ENCODE measurements at regions of chr5 and their contacts with region 1.

Region 1: GRCh38 chr5:141734501-141735230 is 52.6 kb upstream of the ARAP3 start:
- DNase-seq: peak; percentile 66
- H3K4me3 ChIP-seq: no peak overlapping the region
- H3K27ac ChIP-seq: no peak overlapping the region
- H3K4me1 ChIP-seq: no peaks in the 10 kb centered on the region
- H3K27me3 ChIP-seq: no peaks in the 10 kb centered on the region
- CTCF ChIP-seq: no peak

Region 2: GRCh38 chr5:141713616-141714309 is 20.9 kb before region 1 on chr5:
- CTCF ChIA-PET with region 1: interaction called, 3 read pairs
- dilution Hi-C with region 1: no loop called
- in situ Hi-C with region 1: no loop called
- intact Hi-C with region 1: loop called (anchors 1 kb)
- DNase-seq: peak; percentile 96
- H3K4me3 ChIP-seq: no peak overlapping the region
- H3K27ac ChIP-seq: peak overlapping the region; percentile 77
- H3K4me1 ChIP-seq: peaks cover 50% of the 10 kb centered on the region
- H3K27me3 ChIP-seq: no peaks in the 10 kb centered on the region
- CTCF ChIP-seq: no peak

Region 3: DNA sequence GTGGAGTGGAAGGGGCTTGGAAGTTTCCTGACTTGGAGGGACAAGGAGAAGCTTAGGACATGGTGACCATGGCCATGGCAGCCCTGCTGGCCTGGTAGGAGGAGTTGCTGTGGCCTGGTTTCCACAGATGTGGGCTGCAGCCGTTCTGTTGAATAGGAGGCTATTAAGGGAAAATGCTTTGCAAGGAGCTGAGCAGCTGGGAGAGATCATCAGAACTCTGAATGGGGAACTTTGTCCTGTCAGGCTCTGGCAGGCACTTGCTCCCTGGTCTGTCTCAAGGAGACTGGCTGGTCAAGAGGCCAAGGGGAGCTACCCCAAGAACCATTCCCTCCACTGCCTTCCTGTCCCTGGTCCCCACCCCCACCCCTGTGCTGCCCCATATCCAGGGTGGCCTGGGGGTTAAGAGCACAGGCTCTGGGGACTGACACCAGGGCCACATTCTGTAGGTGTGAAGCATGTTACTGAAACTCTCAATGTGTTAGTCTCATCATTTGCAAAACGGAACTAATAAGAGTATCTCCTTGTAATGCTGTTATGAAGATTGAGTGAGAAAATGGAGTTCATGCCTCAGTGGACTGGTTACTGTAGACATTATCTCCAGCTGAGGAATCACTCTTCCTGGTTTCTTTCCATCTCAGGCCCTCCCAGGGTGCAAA is 31.4 kb after region 1 on chr5:
- CTCF ChIA-PET with region 1: no interaction called
- dilution Hi-C with region 1: loop called (anchors 5 kb)
- in situ Hi-C with region 1: no loop called
- intact Hi-C with region 1: no loop called
- DNase-seq: no peak
- H3K4me3 ChIP-seq: no peak overlapping the region
- H3K27ac ChIP-seq: no peak overlapping the region
- H3K4me1 ChIP-seq: no peaks in the 10 kb centered on the region
- H3K27me3 ChIP-seq: peaks cover 10% of the 10 kb centered on the region
- CTCF ChIP-seq: no peak

Region 4: GRCh38 chr5:141849375-141850243 is 114.9 kb after region 1 on chr5:
- CTCF ChIA-PET with region 1: no interaction called
- dilution Hi-C with region 1: no loop called
- in situ Hi-C with region 1: no loop called
- intact Hi-C with region 1: no loop called
- DNase-seq: peak; percentile 84
- H3K4me3 ChIP-seq: peak overlapping the region; percentile 52 to 66 (median 60)
- H3K27ac ChIP-seq: peak overlapping the region; percentile 87
- H3K4me1 ChIP-seq: peaks cover 17% of the 10 kb centered on the region
- H3K27me3 ChIP-seq: no peaks in the 10 kb centered on the region
- CTCF ChIP-seq: peak in 1 of 2 donors; percentile 1

Region 5: DNA sequence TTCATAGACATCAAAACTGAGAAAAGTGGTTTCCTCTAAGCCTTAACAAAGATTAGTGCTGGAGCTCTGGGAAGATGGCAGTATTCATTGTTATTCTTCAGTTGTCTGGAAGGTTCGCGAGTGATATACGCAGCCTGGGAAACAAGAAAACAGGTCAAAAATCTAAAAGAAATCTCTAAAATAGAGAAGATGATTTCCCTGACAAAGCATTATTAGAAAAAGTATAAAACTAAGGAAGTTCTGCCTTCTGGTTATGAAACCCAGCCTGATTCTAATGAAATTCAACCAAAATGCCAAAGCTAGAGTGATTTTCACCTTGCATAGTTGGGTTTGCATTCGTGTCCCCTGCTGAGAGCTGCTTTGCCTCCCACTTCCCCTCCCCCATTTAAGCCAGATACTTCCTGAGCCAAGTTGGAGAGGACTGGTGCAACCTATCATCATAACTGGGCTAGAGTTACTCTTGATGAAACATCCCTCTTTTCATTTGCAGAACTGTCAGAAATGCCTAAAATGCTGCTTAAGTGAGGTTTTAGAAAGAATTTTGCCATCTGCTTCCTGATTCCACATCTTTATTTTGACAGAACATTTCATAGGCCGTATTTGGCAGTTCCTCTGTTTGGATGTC is 422.3 kb after region 1 on chr5:
- CTCF ChIA-PET with region 1: no interaction called
- dilution Hi-C with region 1: no loop called
- in situ Hi-C with region 1: no loop called
- intact Hi-C with region 1: no loop called
- DNase-seq: no peak
- H3K4me3 ChIP-seq: no peak overlapping the region
- H3K27ac ChIP-seq: no peak overlapping the region
- H3K4me1 ChIP-seq: no peaks in the 10 kb centered on the region
- H3K27me3 ChIP-seq: no peaks in the 10 kb centered on the region
- CTCF ChIP-seq: no peak